A549 (cell line): ENCODE measurements at regions of chr5 and their contacts with region 1.

Region 1: GRCh38 chr5:42751044-42751443 is 5.6 kb upstream of the CCDC152 start:
- DNase-seq: no peak
- ATAC-seq: no peak
- H3K4me3 ChIP-seq: no peak overlapping the region
- H3K27ac ChIP-seq: no peak overlapping the region
- H3K4me1 ChIP-seq: no peaks in the 10 kb centered on the region
- CTCF ChIP-seq: no peak
- EP300 ChIP-seq: no peak
- POLR2A ChIP-seq: no peak
- RAD21 ChIP-seq: no peak

Region 2: GRCh38 chr5:42767491-42768105 is 16.6 kb after region 1 on chr5:
- CTCF ChIA-PET with region 1: interaction called, 11 read pairs
- POLR2A ChIA-PET with region 1: no interaction called
- DNase-seq: peak in 1 of 2 experiments; percentile 22
- ATAC-seq: peak; percentile 54 to 64; a peak in 3 of 6 replicates
- H3K4me3 ChIP-seq: no peak overlapping the region
- H3K27ac ChIP-seq: no peak overlapping the region
- H3K4me1 ChIP-seq: no peaks in the 10 kb centered on the region
- CTCF ChIP-seq: peak; percentile 63
- EP300 ChIP-seq: no peak
- POLR2A ChIP-seq: no peak
- RAD21 ChIP-seq: peak; percentile 67 to 70